ENCODE measurements at regions of chr17 and their contacts with region 1.

Region 1: DNA sequence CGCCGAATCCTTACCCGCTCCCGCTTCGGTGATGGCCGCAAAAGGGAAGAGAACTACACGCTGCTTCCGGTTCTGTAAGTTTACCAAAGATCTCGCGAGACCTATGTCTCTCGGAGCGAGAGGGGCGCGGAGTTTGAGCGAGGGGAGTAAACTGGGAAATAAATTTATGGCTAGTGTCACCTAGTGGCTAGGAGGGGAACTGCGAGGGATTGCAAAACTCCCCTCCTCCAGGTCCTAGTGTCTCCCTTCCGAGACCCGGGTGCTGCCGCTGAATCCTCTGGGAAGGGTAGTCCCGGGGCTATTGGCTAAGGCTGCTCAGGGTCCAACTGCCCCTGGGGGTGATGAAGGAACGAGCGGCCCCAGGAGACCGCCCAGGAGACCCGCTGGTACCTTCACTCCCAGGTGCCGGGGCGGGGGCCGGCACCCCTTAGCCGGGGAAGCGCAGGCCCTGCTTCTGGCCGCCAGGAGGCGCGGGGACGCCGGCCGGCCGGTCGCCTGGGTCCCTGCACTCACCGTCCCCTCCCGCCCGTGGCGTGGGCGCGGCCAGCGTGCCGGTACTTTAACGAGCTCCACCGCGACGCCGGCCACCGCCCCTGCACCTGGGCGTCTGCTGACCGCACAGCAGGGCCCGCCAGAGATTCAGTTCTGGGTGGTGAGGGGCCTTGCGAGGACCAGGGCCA is at the start of gene RPL26:
- DNase-seq: peak; percentile 84 to 98 (median 94)
- H3K4me3 ChIP-seq: peak within 1 kb of the TSS; percentile 65 to 99 (median 86)
- H3K27ac ChIP-seq: peak within 1 kb of the TSS; percentile 73 to 98 (median 89)
- H3K27me3 ChIP-seq: no peaks in the 10 kb centered on the region
- CTCF ChIP-seq: peak; percentile 94 to 100 (median 99)
- total RNA-seq, gene RPL26: 443 to 743 (median 592) TPM

Region 2: GRCh38 chr17:8222630-8223356 is 160.5 kb before region 1 on chr17:
- intact Hi-C with region 1: loop called in 1 of 2 experiments (anchors 10 kb)
- DNase-seq: peak; percentile 93 to 97 (median 94)
- H3K4me3 ChIP-seq: peak overlapping the region; percentile 52 to 99 (median 80)
- H3K27ac ChIP-seq: peak overlapping the region; percentile 95 to 100 (median 99)
- H3K27me3 ChIP-seq: no peaks in the 10 kb centered on the region
- CTCF ChIP-seq: peak in 11 of 56 donors; percentile 10 to 57 (median 32)

Region 3: DNA sequence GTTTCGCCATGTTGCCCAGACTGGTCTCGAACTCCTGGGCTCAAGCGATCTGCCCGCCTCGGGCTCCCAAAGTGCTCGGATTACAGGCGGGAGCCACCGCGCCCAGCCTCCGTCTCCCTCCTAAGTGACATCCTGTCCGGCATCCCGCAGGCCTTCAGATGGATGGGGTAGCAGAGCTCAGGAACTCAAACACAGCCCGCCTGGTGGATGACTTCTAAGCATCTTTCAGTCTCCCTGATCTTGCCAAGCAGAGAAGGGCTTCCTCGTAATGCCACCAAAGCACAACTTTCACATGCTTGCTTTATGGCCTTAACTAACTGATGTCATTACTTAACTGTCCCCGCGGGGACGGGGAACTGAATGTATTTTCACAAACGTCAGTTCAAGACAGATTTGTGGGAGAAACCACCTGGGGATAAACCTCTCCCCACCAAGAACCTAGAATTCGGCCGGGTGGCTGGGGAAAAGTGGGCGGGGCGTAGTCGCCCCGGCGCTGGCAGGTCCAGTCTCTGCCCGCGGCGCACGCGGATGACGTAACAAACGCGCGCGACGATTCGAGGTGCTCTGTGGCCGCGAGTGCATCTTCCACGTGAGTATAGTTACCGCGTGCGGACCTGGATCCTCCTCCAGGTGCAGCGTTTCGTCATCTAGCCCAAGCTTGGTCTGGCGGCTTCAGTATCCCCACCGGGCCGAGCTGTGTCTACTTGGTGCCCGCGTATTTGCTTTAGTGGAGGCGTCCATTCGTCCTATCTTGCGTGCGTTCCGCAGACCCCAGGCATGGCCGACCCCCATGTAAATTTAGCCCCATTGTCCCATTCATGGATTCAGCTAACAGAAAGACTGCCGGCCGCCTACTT is 134.3 kb before region 1 on chr17 and contains the start of gene PFAS:
- intact Hi-C with region 1: loop called in 1 of 2 experiments (anchors 10 kb)
- DNase-seq: peak; percentile 91 to 96 (median 95)
- H3K4me3 ChIP-seq: peak within 1 kb of the TSS; percentile 66 to 99 (median 87)
- H3K27ac ChIP-seq: peak within 1 kb of the TSS; percentile 87 to 100 (median 97)
- H3K27me3 ChIP-seq: no peaks in the 10 kb centered on the region
- CTCF ChIP-seq: peak in 28 of 56 donors; percentile 1 to 56 (median 23)
- total RNA-seq, gene PFAS: 20.3 to 49.9 (median 35.2) TPM

Region 4: GRCh38 chr17:8435245-8436168 is 52.2 kb after region 1 on chr17 and contains the start of gene NDEL1:
- intact Hi-C with region 1: loop called (anchors 5 kb)
- DNase-seq: peak; percentile 96 to 100 (median 99)
- H3K4me3 ChIP-seq: peak within 1 kb of the TSS; percentile 72 to 100 (median 96)
- H3K27ac ChIP-seq: peak within 1 kb of the TSS; percentile 83 to 100 (median 96)
- H3K27me3 ChIP-seq: no peaks in the 10 kb centered on the region
- CTCF ChIP-seq: peak in 31 of 56 donors; percentile 2 to 56 (median 30)
- total RNA-seq, gene NDEL1: 51.0 to 118 (median 91.4) TPM

Region 5: GRCh38 chr17:8745586-8746500 is 362.6 kb after region 1 on chr17:
- intact Hi-C with region 1: loop called (anchors 10 kb)
- DNase-seq: peak in 8 of 10 donors; percentile 24 to 76 (median 64)
- H3K4me3 ChIP-seq: peak overlapping the region; percentile 45 to 82 (median 70)
- H3K27ac ChIP-seq: peak overlapping the region in 9 of 59 donors; percentile 6 to 75 (median 45)
- H3K27me3 ChIP-seq: peaks cover 0 to 8% (median 0%) of the 10 kb centered on the region in 45 donors
- CTCF ChIP-seq: peak; percentile 80 to 99 (median 94)

Measured in dorsolateral prefrontal cortex (tissue), 120 donors.